ENCODE measurements at regions of chr17 and their contacts with region 1.

Region 1: DNA sequence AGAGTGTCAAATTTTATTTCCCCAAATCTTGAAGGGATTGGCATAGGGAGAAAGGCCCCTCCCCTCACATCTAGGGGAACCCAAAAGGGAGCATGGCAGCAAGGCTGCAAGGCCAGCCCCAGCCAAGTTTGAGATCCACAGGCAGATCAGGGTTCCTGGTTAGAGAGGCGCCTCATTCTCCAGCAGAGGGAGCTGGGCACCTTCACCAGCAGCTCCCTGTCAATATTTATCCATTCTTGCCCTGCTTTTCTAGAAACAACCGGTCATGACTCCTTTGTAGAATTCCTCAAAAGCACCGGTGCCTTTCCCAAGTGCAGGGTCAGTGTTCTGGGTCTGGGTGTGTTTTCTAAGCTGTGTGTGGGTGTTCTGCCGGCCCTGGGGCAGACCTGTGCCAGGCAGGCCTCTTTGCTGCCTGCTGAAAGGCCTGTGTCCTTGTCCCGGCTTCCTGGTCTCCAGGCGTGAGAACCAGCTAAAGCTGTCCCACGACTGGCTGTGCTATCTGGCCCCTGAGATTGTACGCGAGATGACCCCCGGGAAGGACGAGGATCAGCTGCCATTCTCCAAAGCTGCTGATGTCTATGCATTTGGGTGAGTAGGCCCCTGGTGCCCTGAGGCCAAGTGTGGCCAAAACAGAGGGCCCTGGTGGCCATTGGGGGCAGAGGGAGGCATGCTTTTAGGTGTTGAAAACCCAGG is 21.2 kb upstream of the LGALS9 start:
- DNase-seq: peak; percentile 70
- H3K4me3 ChIP-seq: no peak overlapping the region
- H3K27ac ChIP-seq: no peak overlapping the region
- H3K4me1 ChIP-seq: no peaks in the 10 kb centered on the region
- H3K27me3 ChIP-seq: no peaks in the 10 kb centered on the region
- CTCF ChIP-seq: peak in 2 of 3 experiments; percentile 49 to 51
- POLR2A ChIP-seq: no peak

Region 2: DNA sequence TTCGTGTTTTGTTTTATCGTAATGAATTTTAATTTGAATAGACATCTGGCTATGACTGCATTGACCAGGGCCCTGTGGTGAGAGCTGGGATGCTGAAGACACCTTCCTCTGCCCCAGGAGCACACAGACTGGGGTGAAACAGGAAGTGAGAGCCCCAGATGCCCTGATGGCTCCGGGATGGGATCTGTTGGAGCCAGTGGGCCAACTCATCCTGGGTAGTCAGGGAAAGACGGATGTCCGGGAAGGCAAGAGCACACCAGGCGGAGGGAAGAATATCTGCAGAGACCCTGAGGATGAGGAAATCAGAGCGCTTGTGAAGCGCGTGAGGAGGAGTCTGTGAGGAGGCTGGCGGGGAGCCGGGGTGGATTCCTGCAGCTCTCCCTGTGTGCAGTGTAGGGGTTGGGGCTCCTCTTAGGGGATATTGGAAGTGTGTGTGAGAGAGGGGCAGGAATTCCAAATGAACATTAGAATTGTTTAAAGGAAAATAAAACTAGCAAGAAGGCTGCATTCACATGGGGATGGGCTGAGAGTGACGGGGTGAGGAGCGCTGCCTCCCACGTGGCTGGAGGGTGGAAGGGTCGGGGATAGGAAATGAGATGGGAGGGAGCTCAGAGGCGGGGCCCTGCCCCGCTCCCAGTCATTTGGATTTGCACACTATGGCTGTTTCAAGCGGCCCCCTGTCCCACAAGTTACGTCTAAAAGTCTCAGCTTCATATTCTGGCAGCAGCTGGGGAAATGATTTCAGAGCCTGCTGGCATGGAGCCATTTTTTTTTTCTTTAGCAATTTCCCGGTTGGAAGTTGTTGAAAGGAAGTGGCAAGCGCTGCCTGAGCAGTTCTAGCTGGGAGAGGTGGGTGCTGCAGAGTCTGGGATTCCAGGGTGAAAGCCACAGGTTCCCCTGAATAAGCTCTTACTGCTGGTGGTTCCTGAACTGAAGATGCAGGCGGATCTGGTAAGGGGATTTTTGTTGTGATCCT is 50.0 kb before region 1 on chr17:
- intact Hi-C with region 1: loop called (anchors 10 kb)
- DNase-seq: peak; percentile 25
- H3K4me3 ChIP-seq: no peak overlapping the region
- H3K27ac ChIP-seq: no peak overlapping the region
- H3K4me1 ChIP-seq: no peaks in the 10 kb centered on the region
- H3K27me3 ChIP-seq: no peaks in the 10 kb centered on the region
- CTCF ChIP-seq: no peak
- POLR2A ChIP-seq: no peak

Region 3: DNA sequence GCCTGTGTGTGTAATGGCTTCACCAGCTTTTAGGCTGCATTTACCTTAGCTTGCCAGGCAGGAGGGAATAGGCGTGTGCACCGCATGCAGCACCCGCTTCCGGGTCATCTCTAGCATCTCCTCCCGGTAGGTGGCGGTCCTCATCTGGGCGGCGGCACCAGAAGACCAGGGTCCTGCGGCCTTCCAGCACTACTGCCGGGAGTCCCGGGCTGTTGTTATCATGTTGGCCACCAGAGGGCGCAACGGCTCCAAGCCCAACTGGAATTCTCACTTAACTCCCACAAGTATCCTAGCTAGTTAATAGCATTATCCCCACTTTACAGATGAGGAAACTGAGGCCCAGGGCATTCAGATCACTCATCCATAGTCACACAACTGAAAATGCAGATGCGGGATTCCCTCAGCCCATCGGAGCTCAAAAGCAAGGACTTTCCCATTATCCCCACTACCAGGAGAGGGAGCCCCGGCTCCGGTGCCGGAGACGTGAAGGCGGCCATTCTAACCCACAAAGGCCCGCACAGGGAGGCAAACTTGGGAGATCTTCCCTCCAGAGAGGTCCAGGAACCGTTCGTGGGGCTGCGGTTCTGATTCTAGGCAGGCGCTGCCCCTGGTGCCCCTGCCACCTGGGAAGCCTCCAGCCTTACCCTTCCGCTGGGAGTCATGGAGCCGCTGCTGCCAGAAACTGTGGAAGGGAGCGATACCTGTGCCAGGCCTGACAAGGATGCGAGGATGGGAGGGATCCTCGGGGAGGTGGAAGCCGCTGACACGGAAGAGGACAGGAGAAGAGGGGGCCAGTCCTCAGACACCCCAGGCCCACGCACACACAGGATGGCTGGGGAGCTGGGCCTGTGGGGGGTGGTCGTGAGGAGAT is 45.1 kb after region 1 on chr17:
- intact Hi-C with region 1: loop called (anchors 2 kb)
- DNase-seq: peak; percentile 84
- H3K4me3 ChIP-seq: peak overlapping the region in 1 of 2 donors; percentile 10
- H3K27ac ChIP-seq: no peak overlapping the region
- H3K4me1 ChIP-seq: no peaks in the 10 kb centered on the region
- H3K27me3 ChIP-seq: no peaks in the 10 kb centered on the region
- CTCF ChIP-seq: peak; percentile 85 to 95 (median 91)
- POLR2A ChIP-seq: no peak

Region 4: GRCh38 chr17:27692766-27693165 is 83.0 kb after region 1 on chr17:
- intact Hi-C with region 1: no loop called
- DNase-seq: no peak
- H3K4me3 ChIP-seq: no peak overlapping the region
- H3K27ac ChIP-seq: no peak overlapping the region
- H3K4me1 ChIP-seq: no peaks in the 10 kb centered on the region
- H3K27me3 ChIP-seq: no peaks in the 10 kb centered on the region
- CTCF ChIP-seq: no peak
- POLR2A ChIP-seq: no peak

Measured in testis (tissue), 5 donors.